ENCODE measurements at regions of chr9 and their contacts with region 1.

Region 1: GRCh38 chr9:136978073-136978864 is 965 bp downstream of the PTGDS start:
- DNase-seq: peak; percentile 87
- ATAC-seq: peak; percentile 47
- H3K4me3 Mint-ChIP-seq: no peak overlapping the region
- H3K27ac Mint-ChIP-seq: no peak overlapping the region
- H3K4me1 Mint-ChIP-seq: peaks cover 13% of the 10 kb centered on the region
- H3K27me3 Mint-ChIP-seq: no peaks in the 10 kb centered on the region

Region 2: DNA sequence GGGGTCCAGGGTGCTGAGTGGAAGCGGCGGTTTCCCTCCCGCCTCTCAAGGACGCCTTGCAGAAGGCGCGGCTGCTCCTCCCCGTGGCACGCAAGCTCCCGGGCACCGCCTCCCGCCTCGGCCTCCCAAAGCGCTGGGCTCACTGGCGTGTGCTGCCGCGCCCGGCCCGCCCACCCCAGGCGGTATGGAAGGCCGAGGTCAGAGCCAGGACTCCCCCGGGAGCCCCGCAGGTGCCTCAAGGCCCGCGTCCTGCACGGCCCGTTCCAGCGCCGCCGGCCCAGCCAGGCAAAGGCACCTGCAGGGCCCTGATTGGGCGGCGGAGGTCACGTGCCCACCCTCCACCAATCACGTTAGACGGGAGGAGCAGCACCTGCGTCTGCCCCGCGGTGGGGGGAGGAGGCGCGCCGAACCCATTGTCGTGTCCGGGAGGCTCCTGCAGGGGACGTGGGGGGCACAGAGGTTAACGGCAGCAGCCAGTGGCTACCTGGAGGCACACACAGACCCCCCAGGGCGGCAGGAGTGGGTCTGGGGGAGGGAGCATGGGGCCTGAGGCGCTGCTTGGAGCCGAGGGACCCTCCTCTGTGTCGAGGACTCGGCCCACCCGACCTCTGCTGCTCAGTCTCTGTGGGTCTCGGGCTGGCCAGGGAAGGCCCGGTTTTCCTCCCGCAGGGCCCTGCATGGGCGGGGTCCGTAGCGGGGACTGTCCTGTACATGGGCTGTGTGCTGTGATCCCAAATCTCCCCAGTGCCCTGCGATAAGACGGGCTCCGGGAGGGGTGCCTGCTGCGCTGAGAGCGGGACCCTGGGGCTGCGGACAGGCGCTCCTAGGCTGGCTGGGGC is 28.2 kb before region 1 on chr9:
- CTCF ChIA-PET with region 1: interaction called, 6 read pairs
- POLR2A ChIA-PET with region 1: no interaction called
- intact Hi-C with region 1: loop called in 1 of 2 experiments (anchors 1 kb)
- DNase-seq: peak; percentile 98
- ATAC-seq: peak; percentile 98
- H3K4me3 Mint-ChIP-seq: peak overlapping the region; percentile 78
- H3K27ac Mint-ChIP-seq: peak overlapping the region; percentile 78
- H3K4me1 Mint-ChIP-seq: peaks cover 2% of the 10 kb centered on the region
- H3K27me3 Mint-ChIP-seq: no peaks in the 10 kb centered on the region

Region 3: GRCh38 chr9:137021979-137022619 is 43.8 kb after region 1 on chr9:
- CTCF ChIA-PET with region 1: no interaction called
- POLR2A ChIA-PET with region 1: no interaction called
- intact Hi-C with region 1: loop called (anchors 1 kb)
- DNase-seq: peak; percentile 93
- ATAC-seq: peak; percentile 97
- H3K4me3 Mint-ChIP-seq: no peak overlapping the region
- H3K27ac Mint-ChIP-seq: no peak overlapping the region
- H3K4me1 Mint-ChIP-seq: peaks cover 3% of the 10 kb centered on the region
- H3K27me3 Mint-ChIP-seq: no peaks in the 10 kb centered on the region

Region 4: GRCh38 chr9:137029058-137029936 is 51.0 kb after region 1 on chr9:
- CTCF ChIA-PET with region 1: interaction called, 12 read pairs
- POLR2A ChIA-PET with region 1: no interaction called
- intact Hi-C with region 1: no loop called
- DNase-seq: peak; percentile 88
- ATAC-seq: peak; percentile 52
- H3K4me3 Mint-ChIP-seq: peak overlapping the region; percentile 60
- H3K27ac Mint-ChIP-seq: peak overlapping the region; percentile 42
- H3K4me1 Mint-ChIP-seq: peaks cover 46% of the 10 kb centered on the region
- H3K27me3 Mint-ChIP-seq: no peaks in the 10 kb centered on the region

Region 5: GRCh38 chr9:137156567-137157375 is 178.5 kb after region 1 on chr9:
- CTCF ChIA-PET with region 1: no interaction called
- POLR2A ChIA-PET with region 1: no interaction called
- intact Hi-C with region 1: loop called in 1 of 2 experiments (anchors 1 kb)
- DNase-seq: peak; percentile 85
- ATAC-seq: peak; percentile 79
- H3K4me3 Mint-ChIP-seq: peak overlapping the region; percentile 36
- H3K27ac Mint-ChIP-seq: no peak overlapping the region
- H3K4me1 Mint-ChIP-seq: peaks cover 11% of the 10 kb centered on the region
- H3K27me3 Mint-ChIP-seq: peaks cover 30% of the 10 kb centered on the region

Region 6: DNA sequence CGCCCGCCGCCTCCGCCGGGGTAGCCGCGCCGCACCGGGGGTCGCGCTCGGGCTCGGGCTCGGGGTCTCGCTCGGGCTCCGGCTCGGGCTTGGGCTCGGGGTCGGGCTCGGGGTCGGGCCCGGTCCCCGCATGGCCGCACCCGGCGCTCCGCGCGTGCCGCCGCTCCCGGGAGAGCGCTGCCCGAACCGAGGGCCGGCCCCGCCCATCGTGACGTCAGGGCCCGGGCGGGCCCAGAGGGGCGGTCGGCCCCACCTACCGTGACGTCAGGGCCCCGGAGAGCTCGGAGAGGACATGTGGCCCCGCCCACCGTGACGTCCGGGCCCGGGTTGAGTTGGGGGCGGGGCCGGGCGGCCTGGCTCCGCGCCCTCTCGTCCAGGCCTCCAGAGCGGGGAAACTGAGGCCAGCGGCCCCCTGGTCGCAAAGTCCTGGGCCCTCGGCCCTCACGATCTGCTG is 480.9 kb after region 1 on chr9 and contains the start of gene NSMF:
- CTCF ChIA-PET with region 1: no interaction called
- POLR2A ChIA-PET with region 1: no interaction called
- intact Hi-C with region 1: loop called in 1 of 2 experiments (anchors 1 kb)
- DNase-seq: peak; percentile 98
- ATAC-seq: peak; percentile 66
- H3K4me3 Mint-ChIP-seq: peak within 1 kb of the TSS; percentile 39
- H3K27ac Mint-ChIP-seq: peak within 1 kb of the TSS; percentile 78
- H3K4me1 Mint-ChIP-seq: peaks cover 33% of the 10 kb centered on the region
- H3K27me3 Mint-ChIP-seq: no peaks in the 10 kb centered on the region
- total RNA-seq, gene NSMF: 63.6 to 65.0 TPM

Measured in activated CD4-positive, alpha-beta T cell treated with anti-CD3 and anti-CD28 coated beads for 36 hours (primary cell).